ENCODE measurements at regions of chr9 and their contacts with region 1.

Region 1: DNA sequence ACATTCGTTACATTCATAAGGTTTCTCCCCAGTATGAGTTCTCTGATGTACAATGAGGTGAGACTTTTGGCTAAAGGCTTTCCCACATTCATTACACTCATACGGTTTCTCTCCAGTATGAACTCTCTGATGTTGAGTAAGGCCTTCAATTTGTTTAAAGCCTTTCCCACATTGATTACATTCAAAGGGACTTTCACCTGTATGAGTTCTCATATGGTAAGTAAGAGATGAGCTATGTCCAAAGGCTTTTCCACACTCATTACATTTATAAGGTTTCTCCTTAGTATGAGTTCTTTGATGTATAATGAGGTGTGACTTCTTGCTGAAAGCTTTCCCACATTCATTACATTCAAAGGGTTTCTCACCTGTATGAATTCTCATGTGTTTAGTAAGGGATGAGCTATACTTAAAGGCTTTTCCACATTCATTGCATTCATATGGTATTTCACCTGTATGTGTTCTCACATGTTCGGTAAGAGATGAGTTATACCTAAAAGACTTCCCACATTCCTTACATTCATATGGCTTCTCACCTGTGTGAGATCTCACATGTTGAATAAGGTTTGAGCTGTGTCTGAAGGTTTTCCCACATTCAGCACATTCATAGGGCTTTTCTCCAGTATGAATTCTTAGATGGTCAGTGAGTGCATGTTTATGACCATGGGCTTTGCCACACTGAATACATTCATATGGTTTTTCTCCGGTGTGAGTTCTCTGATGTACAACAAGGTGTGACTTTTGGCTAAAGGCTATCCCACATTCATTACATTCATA is 13.5 kb downstream of the ZFP37 start:
- DNase-seq: no peak

Region 2: GRCh38 chr9:111851566-111851965 is 1191.5 kb before region 1 on chr9:
- intact Hi-C with region 1: no loop called
- DNase-seq: no peak

Region 3: GRCh38 chr9:112546149-112547012 is 496.7 kb before region 1 on chr9:
- intact Hi-C with region 1: no loop called
- DNase-seq: no peak

Region 4: DNA sequence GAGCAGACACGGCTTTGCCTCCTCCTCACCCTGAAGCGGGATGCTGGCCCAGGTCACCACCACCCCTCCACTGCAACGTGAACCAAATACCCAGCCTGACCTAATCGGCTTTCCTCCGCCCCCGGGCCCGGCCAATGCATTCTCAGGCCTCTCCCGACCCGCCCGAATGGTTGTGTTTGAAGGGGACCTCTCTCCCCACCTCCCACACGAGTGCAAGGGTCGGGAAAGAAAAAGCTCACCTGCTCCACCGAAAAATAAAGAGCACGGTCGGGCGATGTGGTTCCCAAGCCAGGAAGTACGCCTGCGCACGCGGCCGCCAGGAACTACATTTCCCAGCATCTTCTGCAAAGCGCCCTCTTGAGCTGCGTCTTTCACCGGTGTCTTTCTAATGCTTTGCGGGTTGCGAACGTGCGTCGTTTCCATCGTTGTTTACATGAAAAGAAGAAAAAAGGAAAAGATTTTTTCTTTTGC is 31.1 kb before region 1 on chr9 and contains the start of gene ZNF883:
- intact Hi-C with region 1: loop called in 1 of 2 experiments (anchors 1 kb)
- DNase-seq: peak; percentile 82
- total RNA-seq, gene ZNF883: 2.1 to 3.2 TPM